Caco-2 (cell line): ENCODE measurements at regions of chr4 and their contacts with region 1.

Region 1: GRCh38 chr4:156968479-156968984 is 3.1 kb downstream of the PDGFC start:
- DNase-seq: peak; percentile 57 to 68
- H3K4me3 ChIP-seq: no peak overlapping the region
- H3K4me3 Mint-ChIP-seq: peak overlapping the region; percentile 45
- H3K27ac Mint-ChIP-seq: no peak overlapping the region
- H3K4me1 ChIP-seq: peaks cover 6% of the 10 kb centered on the region; the same call in 1 of the 2 replicates
- H3K4me1 Mint-ChIP-seq: peaks cover 11% of the 10 kb centered on the region
- H3K27me3 ChIP-seq: no peaks in the 10 kb centered on the region
- H3K27me3 Mint-ChIP-seq: no peaks in the 10 kb centered on the region
- CTCF ChIP-seq: peak; percentile 76 to 77

Region 2: GRCh38 chr4:156169011-156169410 is 799.5 kb before region 1 on chr4:
- CTCF ChIA-PET with region 1: no interaction called
- POLR2A ChIA-PET with region 1: no interaction called
- intact Hi-C with region 1: loop called (anchors 2 kb)
- DNase-seq: peak; percentile 38 to 43
- H3K4me3 ChIP-seq: no peak overlapping the region
- H3K4me3 Mint-ChIP-seq: no peak overlapping the region
- H3K27ac Mint-ChIP-seq: no peak overlapping the region
- H3K4me1 ChIP-seq: no peaks in the 10 kb centered on the region
- H3K4me1 Mint-ChIP-seq: peaks cover 8% of the 10 kb centered on the region
- H3K27me3 ChIP-seq: no peaks in the 10 kb centered on the region
- H3K27me3 Mint-ChIP-seq: peaks cover 7% of the 10 kb centered on the region
- CTCF ChIP-seq: peak; percentile 42 to 60

Region 3: GRCh38 chr4:156594624-156595023 is 373.9 kb before region 1 on chr4:
- CTCF ChIA-PET with region 1: no interaction called
- POLR2A ChIA-PET with region 1: no interaction called
- intact Hi-C with region 1: loop called (anchors 10 kb)
- DNase-seq: no peak
- H3K4me3 ChIP-seq: no peak overlapping the region
- H3K4me3 Mint-ChIP-seq: no peak overlapping the region
- H3K27ac Mint-ChIP-seq: no peak overlapping the region
- H3K4me1 ChIP-seq: peaks cover 11% of the 10 kb centered on the region; the same call in 1 of the 2 replicates
- H3K4me1 Mint-ChIP-seq: peaks cover 7% of the 10 kb centered on the region
- H3K27me3 ChIP-seq: no peaks in the 10 kb centered on the region
- H3K27me3 Mint-ChIP-seq: no peaks in the 10 kb centered on the region
- CTCF ChIP-seq: no peak

Region 4: DNA sequence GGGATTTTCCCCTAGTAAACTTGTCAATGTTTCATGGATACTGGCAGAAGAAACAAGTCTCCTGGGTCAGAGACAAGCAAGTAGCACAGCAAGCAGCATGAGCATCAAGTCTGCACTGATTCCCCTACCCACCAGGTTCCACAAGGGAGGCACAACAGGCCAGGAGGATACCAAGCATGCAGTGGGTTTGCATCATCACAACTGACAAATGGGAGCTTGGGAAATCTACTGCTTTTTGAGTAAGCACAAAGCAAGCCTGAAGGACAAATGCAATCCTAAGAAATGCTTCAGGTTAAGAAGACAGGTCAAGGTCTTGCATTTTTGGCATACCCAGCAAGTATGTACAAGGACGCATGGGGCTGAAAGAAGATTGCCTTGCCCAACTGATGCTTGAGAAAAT is 276.5 kb before region 1 on chr4:
- CTCF ChIA-PET with region 1: no interaction called
- POLR2A ChIA-PET with region 1: no interaction called
- intact Hi-C with region 1: loop called (anchors 1 kb)
- DNase-seq: peak in 1 of 2 experiments; percentile 6
- H3K4me3 ChIP-seq: no peak overlapping the region
- H3K4me3 Mint-ChIP-seq: no peak overlapping the region
- H3K27ac Mint-ChIP-seq: no peak overlapping the region
- H3K4me1 ChIP-seq: no peaks in the 10 kb centered on the region
- H3K4me1 Mint-ChIP-seq: no peaks in the 10 kb centered on the region
- H3K27me3 ChIP-seq: no peaks in the 10 kb centered on the region
- H3K27me3 Mint-ChIP-seq: peaks cover 5% of the 10 kb centered on the region
- CTCF ChIP-seq: no peak

Region 5: DNA sequence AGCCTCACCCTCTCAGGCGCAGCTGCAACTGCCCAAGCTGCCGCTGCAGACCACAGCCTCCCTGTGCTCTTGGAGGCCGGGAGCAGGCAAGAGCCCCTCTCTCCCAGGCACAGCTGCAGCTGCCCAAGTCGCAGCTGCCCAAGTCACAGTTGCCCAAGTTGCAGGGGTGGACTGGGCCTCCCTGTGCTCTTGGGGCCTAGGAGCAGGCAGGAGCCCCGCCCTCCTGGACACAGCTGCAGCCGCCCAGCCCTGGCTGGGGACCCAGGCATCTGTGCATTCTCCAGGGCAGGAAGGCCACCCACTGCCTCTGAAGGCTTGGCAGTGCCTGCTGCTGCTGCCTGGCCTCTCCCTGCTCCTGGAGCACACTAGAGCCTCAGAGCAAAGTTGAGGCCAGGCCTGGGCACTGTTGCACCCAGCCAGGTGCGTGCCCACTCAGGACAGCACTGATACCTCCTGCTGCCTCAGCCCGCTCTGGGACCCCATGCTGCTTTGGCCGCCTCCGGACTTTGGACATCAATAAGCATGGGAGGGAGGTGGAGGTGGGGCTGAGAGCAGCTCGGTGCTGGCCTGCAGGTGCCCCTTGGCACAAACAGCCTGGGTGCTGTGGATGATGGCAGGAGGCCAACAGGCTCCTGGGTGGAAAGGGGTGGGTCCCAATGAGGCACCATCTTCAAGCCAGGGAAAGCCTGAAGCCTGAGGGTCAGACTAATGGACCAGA is 244.4 kb before region 1 on chr4:
- CTCF ChIA-PET with region 1: no interaction called
- POLR2A ChIA-PET with region 1: no interaction called
- intact Hi-C with region 1: no loop called
- DNase-seq: no peak
- H3K4me3 ChIP-seq: no peak overlapping the region
- H3K4me3 Mint-ChIP-seq: no peak overlapping the region
- H3K27ac Mint-ChIP-seq: no peak overlapping the region
- H3K4me1 ChIP-seq: no peaks in the 10 kb centered on the region
- H3K4me1 Mint-ChIP-seq: no peaks in the 10 kb centered on the region
- H3K27me3 ChIP-seq: no peaks in the 10 kb centered on the region
- H3K27me3 Mint-ChIP-seq: peaks cover 2% of the 10 kb centered on the region
- CTCF ChIP-seq: no peak

Region 6: DNA sequence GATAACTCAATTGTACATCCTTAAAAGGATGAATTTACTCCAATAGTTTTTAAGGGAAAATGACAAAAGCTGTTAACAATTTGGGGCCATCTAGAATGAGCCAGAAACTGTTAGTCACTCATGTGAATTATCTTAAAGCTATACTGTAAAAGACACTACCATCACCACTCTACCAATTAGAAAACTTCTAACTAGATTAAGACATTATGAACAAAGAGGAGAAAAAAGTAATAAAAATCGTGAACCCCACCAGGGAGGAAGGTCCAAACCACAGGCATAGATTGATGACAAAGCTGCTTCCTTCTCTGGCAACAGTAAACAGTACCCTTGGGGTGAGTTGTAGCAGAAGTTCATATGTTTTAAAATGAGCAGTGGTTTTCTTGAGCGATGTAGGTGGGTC is 103.1 kb before region 1 on chr4:
- CTCF ChIA-PET with region 1: no interaction called
- POLR2A ChIA-PET with region 1: no interaction called
- intact Hi-C with region 1: loop called (anchors 1 kb)
- DNase-seq: no peak
- H3K4me3 ChIP-seq: no peak overlapping the region
- H3K4me3 Mint-ChIP-seq: no peak overlapping the region
- H3K27ac Mint-ChIP-seq: no peak overlapping the region
- H3K4me1 ChIP-seq: no peaks in the 10 kb centered on the region
- H3K4me1 Mint-ChIP-seq: no peaks in the 10 kb centered on the region
- H3K27me3 ChIP-seq: no peaks in the 10 kb centered on the region
- H3K27me3 Mint-ChIP-seq: no peaks in the 10 kb centered on the region
- CTCF ChIP-seq: no peak

Region 7: GRCh38 chr4:156949373-156949814 is 19.1 kb before region 1 on chr4:
- CTCF ChIA-PET with region 1: no interaction called
- POLR2A ChIA-PET with region 1: no interaction called
- intact Hi-C with region 1: loop called (anchors 1 kb)
- DNase-seq: peak in 1 of 2 experiments; percentile 54
- H3K4me3 ChIP-seq: no peak overlapping the region
- H3K4me3 Mint-ChIP-seq: peak overlapping the region; percentile 51
- H3K27ac Mint-ChIP-seq: peak overlapping the region; percentile 58
- H3K4me1 ChIP-seq: peaks cover 30% of the 10 kb centered on the region
- H3K4me1 Mint-ChIP-seq: peaks cover 23% of the 10 kb centered on the region
- H3K27me3 ChIP-seq: no peaks in the 10 kb centered on the region
- H3K27me3 Mint-ChIP-seq: no peaks in the 10 kb centered on the region
- CTCF ChIP-seq: no peak

Region 8: GRCh38 chr4:157128395-157128794 is 159.9 kb after region 1 on chr4:
- CTCF ChIA-PET with region 1: no interaction called
- POLR2A ChIA-PET with region 1: no interaction called
- intact Hi-C with region 1: loop called (anchors 1 kb)
- DNase-seq: peak in 1 of 2 experiments; percentile 10
- H3K4me3 ChIP-seq: no peak overlapping the region
- H3K4me3 Mint-ChIP-seq: no peak overlapping the region
- H3K27ac Mint-ChIP-seq: no peak overlapping the region
- H3K4me1 ChIP-seq: no peaks in the 10 kb centered on the region
- H3K4me1 Mint-ChIP-seq: no peaks in the 10 kb centered on the region
- H3K27me3 ChIP-seq: no peaks in the 10 kb centered on the region
- H3K27me3 Mint-ChIP-seq: no peaks in the 10 kb centered on the region
- CTCF ChIP-seq: peak in 1 of 2 experiments; percentile 15